Calu3 (cell line): ENCODE measurements at regions of chr16 and their contacts with region 1.

Region 1: DNA sequence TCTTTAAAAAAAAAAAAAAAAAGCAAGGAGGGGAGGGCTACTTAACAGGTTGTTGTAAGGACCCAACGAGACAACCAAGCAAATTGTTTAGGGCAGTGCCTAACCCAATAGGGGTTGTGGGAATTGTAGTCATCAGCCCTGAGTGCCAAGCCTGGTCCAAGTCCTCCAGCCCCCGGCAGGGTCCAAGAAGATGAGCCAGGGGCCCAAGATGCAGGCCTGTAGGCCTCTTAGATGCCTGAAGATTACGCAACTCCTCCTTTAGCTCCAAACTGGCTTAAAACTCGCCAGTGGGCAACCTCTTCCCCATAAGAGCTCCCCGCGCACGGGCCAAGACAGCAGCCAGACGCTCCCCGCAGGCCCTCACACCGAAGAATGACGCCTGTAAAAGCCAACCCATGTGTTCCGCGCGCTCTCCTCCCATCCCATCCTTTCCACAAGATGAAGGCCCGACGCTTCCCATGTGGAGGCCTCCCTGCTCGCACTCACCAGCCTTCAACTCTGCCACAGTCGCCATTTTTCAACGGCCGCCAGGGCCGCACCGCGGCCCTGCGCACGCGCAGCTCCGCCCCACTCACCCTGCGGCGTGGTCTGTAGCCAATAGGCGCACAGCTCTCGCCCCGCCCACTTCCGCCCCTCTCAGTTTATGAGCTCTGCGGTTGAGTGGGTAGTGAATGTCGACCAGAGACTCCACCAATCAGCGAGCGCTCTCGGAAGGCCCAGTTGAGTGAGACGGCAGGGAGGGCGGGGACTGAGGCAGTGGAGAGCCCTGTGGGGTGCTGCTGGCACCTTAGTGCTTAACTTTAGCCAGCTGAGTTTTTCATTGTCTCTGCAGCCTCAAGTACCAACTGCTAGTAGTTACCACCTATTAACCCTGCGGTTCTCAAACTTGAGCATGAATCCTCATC is at the start of gene CEP20:
- DNase-seq: peak; percentile 100
- H3K4me3 Mint-ChIP-seq: peak within 1 kb of the TSS; percentile 82
- H3K27ac Mint-ChIP-seq: peak within 1 kb of the TSS; percentile 65
- H3K4me1 Mint-ChIP-seq: peaks cover 21% of the 10 kb centered on the region
- H3K27me3 Mint-ChIP-seq: no peaks in the 10 kb centered on the region
- CTCF ChIP-seq: no peak
- total RNA-seq, gene CEP20: 44.0 and 52.4 TPM in 2 replicates

Region 2: GRCh38 chr16:15899538-15900100 is 11.3 kb after region 1 on chr16:
- CTCF ChIA-PET with region 1: interaction called, 10 read pairs
- intact Hi-C with region 1: no loop called
- DNase-seq: peak; percentile 91
- H3K4me3 Mint-ChIP-seq: peak overlapping the region; percentile 9
- H3K27ac Mint-ChIP-seq: peak overlapping the region; percentile 91
- H3K4me1 Mint-ChIP-seq: peaks cover 19% of the 10 kb centered on the region
- H3K27me3 Mint-ChIP-seq: no peaks in the 10 kb centered on the region
- CTCF ChIP-seq: no peak

Region 3: DNA sequence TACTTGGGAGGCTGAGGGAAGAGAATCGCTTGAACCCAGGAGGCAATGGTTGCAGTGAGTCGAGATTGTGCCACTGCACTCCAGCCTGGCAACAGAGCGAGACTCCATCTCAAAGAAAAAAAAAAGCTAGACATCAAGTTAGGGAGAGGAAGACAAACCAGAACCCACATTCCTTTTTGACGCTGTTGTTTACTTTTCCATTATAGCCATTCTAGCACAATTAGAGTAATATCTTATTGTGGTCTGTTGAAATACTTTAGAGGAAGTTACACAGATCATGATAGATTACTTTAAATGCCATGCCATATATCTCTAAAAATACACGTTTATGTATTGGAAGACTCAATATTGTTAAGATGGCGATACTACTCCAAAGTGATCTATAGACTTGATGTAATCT is 44.6 kb after region 1 on chr16:
- CTCF ChIA-PET with region 1: no interaction called
- intact Hi-C with region 1: loop called (anchors 5 kb)
- DNase-seq: no peak
- H3K4me3 Mint-ChIP-seq: no peak overlapping the region
- H3K27ac Mint-ChIP-seq: no peak overlapping the region
- H3K4me1 Mint-ChIP-seq: no peaks in the 10 kb centered on the region
- H3K27me3 Mint-ChIP-seq: no peaks in the 10 kb centered on the region
- CTCF ChIP-seq: no peak

Region 4: GRCh38 chr16:15949210-15950160 is 61.2 kb after region 1 on chr16 and contains the start of gene ABCC1:
- CTCF ChIA-PET with region 1: interaction called, 4 read pairs
- intact Hi-C with region 1: loop called (anchors 5 kb)
- DNase-seq: peak; percentile 59
- H3K4me3 Mint-ChIP-seq: peak within 1 kb of the TSS; percentile 90
- H3K27ac Mint-ChIP-seq: peak within 1 kb of the TSS; percentile 79
- H3K4me1 Mint-ChIP-seq: peaks cover 48% of the 10 kb centered on the region
- H3K27me3 Mint-ChIP-seq: no peaks in the 10 kb centered on the region
- CTCF ChIP-seq: no peak
- total RNA-seq, gene ABCC1: 46.3 and 46.4 TPM in 2 replicates

Region 5: DNA sequence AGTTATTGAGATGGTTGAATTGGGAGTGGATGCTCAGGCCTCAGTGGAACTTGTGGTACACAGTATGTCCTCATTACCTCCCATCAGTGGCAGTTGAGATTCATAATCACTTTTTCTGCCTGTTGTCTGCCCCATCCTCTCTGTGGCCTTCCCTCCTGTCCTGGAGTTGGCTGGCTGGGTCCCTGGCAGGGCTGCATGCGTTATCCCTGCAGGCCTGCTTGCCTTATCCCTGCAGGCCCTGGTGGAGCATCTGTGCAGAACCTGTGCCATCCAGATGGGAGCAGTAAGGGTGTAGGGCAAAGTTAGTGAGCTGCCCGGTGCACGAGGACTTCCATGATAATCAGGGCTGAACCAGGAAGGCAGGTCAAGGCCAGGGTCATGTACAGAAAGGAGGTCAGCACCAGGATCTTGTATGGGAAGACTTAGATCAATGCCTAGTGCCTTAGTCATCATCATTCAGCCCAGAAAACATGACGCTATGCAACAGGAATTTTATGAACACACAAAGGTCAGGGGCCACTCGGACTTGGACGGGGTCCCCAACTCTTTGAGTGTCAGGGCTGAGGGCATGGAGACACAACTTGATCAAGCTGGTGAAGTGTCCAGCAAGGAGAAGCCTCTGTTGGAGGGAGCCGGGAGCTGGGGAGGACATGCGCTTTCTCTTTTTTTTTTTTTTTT is 108.2 kb after region 1 on chr16:
- CTCF ChIA-PET with region 1: interaction called, 3 read pairs
- intact Hi-C with region 1: loop called (anchors 5 kb)
- DNase-seq: peak; percentile 55
- H3K4me3 Mint-ChIP-seq: peak overlapping the region; percentile 22
- H3K27ac Mint-ChIP-seq: peak overlapping the region; percentile 86
- H3K4me1 Mint-ChIP-seq: peaks cover 29% of the 10 kb centered on the region
- H3K27me3 Mint-ChIP-seq: no peaks in the 10 kb centered on the region
- CTCF ChIP-seq: no peak

Region 6: DNA sequence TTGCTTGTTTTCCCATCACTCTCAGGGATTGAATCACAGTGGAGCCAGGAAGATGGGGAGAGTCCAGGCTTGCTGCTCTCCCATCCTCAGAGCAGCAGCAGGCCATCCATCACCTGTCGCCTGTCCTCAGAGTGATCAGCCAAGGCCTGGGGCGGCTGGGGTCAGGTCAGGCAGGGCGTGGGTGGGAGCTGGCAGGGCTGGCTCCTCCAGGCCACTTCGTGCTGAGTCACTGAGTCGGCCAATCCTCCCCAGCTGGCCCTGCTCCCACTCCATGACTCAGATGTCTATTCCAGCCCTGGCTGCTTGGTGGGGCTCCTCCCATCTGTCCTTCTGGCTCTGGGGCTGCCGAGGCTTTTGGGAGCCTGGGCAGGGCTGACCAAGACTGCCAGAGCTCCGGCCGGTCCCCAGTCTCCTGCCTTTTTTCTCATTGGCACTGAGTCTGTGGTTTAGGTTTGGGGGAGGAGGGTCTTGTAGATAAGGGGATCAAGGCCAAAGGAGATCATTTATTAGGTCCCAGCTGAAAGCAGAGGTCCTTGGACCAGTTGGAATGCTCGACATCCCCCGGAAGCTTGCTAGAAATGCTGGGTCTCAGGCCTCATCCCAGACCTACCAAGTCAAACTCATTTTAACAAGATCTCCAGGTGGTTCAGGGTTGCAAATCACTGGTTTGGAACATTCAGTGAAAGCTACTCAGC is 133.8 kb after region 1 on chr16:
- CTCF ChIA-PET with region 1: no interaction called
- intact Hi-C with region 1: loop called (anchors 10 kb)
- DNase-seq: peak; percentile 93
- H3K4me3 Mint-ChIP-seq: peak overlapping the region; percentile 44
- H3K27ac Mint-ChIP-seq: peak overlapping the region; percentile 13
- H3K4me1 Mint-ChIP-seq: peaks cover 61% of the 10 kb centered on the region
- H3K27me3 Mint-ChIP-seq: no peaks in the 10 kb centered on the region
- CTCF ChIP-seq: no peak

Region 7: GRCh38 chr16:17194190-17194780 is 1306.0 kb after region 1 on chr16:
- CTCF ChIA-PET with region 1: interaction called, 10 read pairs
- intact Hi-C with region 1: no loop called
- DNase-seq: peak; percentile 31
- H3K4me3 Mint-ChIP-seq: no peak overlapping the region
- H3K27ac Mint-ChIP-seq: no peak overlapping the region
- H3K4me1 Mint-ChIP-seq: no peaks in the 10 kb centered on the region
- H3K27me3 Mint-ChIP-seq: no peaks in the 10 kb centered on the region
- CTCF ChIP-seq: peak; percentile 34